ENCODE measurements at regions of chr3 and their contacts with region 1.

Region 1: GRCh38 chr3:141368062-141368924 is at the start of gene ZBTB38:
- DNase-seq: peak; percentile 95 to 96 (median 96)
- ATAC-seq: peak; percentile 96
- H3K4me3 ChIP-seq: peak within 1 kb of the TSS; percentile 46
- H3K27ac ChIP-seq: peak within 1 kb of the TSS; percentile 99
- H3K4me1 ChIP-seq: peaks cover 9% of the 10 kb centered on the region
- H3K27me3 ChIP-seq: no peaks in the 10 kb centered on the region
- total RNA-seq, gene ZBTB38: 68.6 to 76.9 (median 73.6) TPM

Region 2: DNA sequence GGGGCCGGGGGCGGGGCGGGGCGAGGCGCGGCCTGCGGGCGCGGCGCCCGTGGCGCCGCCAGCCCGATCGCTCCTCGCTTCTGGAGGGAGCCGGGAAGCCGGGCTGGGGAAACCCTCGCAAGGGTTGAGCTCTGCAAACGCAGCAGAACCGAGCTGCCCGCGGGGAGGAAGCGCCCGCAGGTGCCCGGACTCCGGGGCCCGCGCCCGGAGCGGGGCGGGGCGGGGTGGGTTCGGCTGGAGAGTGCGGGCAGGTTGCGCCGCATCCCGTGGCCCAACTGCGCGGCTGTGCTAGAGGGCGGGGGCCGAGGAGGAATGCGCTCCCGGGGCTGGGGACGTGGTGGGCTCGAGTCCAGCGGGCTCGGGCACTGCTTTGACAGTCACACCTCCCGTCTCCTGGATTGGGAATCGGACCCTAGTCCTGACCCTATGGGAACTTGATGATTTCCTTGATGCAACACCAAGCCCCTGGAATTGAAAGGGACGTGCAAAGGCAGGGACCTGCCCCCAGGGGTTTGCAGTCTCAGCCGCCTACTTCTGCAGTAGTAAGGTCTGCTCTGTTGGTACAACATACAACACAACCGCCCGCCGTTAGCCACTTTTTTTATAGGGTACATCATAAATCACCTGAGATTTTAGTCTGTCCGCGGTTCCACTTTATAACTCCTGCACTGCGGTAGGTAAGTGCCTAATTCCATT is 34.3 kb after region 1 on chr3:
- intact Hi-C with region 1: loop called in 1 of 4 experiments (anchors 5 kb)
- DNase-seq: peak; percentile 72 to 91 (median 91)
- ATAC-seq: peak; percentile 82 to 83
- H3K4me3 ChIP-seq: peak overlapping the region; percentile 87
- H3K27ac ChIP-seq: peak overlapping the region; percentile 96
- H3K4me1 ChIP-seq: peaks cover 11% of the 10 kb centered on the region
- H3K27me3 ChIP-seq: no peaks in the 10 kb centered on the region

Region 3: GRCh38 chr3:141412936-141413354 is 44.7 kb after region 1 on chr3:
- intact Hi-C with region 1: no loop called
- DNase-seq: peak; percentile 96 to 98 (median 97)
- ATAC-seq: peak; percentile 92 to 93
- H3K4me3 ChIP-seq: peak overlapping the region; percentile 52
- H3K27ac ChIP-seq: peak overlapping the region; percentile 99
- H3K4me1 ChIP-seq: peaks cover 46% of the 10 kb centered on the region
- H3K27me3 ChIP-seq: no peaks in the 10 kb centered on the region